Left ventricle myocardium superior (tissue), 1 donor: ENCODE measurements at regions of chr6 and their contacts with region 1.

Region 1: GRCh38 chr6:70371454-70372105 is 41.7 kb upstream of the FAM135A start:
- DNase-seq: no peak
- ATAC-seq: no peak

Region 2: GRCh38 chr6:70241991-70242420 is 129.6 kb before region 1 on chr6:
- intact Hi-C with region 1: no loop called
- DNase-seq: no peak
- ATAC-seq: no peak

Region 3: GRCh38 chr6:70436320-70436719 is 64.7 kb after region 1 on chr6:
- intact Hi-C with region 1: no loop called
- DNase-seq: no peak
- ATAC-seq: no peak

Region 4: DNA sequence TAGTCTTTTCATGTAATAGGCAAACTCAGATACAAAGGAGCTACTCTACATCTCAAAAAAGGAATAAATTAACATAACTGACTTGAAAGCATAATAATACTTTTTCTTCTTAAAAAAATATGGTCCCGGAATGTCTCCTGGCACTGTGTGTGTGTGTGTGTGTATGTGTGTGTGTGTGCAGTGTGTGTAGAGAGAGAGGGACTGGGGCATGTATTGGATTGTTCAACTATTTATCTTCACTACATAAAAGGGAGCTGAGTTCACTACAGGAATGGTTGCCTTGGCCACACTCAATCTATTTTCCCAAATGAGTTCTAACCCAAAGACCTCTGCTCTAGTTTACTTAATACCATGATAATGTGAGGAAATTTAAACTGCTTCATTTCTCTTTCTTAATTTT is 534.2 kb after region 1 on chr6:
- intact Hi-C with region 1: no loop called
- DNase-seq: no peak
- ATAC-seq: no peak

Region 5: DNA sequence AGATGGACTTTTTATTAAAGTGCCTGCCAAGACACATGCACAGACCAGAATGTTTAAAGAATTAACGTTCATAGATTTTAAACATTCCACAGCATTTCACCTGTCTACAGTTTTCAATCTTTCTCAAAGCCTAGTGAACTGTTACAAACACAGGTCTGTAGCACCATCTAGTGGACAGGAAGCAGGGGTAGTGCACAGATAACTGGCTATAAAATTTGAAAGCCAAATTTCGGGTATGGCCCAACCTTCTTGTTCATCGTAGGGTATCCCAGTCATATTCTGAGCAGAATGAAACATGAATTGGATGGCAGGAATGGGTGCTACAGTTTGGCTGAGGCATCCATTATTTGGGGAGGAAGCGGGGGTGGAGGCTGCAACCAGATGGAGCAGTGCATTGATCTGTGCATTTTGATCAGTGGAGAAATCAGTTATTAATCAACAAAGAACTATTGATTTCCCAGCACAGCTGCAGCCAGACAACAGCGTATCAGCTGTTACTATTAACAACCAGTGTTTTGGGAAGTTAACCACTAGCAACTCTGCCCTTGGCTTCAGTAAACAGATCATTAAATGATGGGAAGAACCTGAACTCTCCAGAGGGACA is 641.4 kb after region 1 on chr6:
- intact Hi-C with region 1: loop called (anchors 10 kb)
- DNase-seq: no peak
- ATAC-seq: peak; percentile 68